ENCODE measurements at regions of chr19 and their contacts with region 1.

Region 1: DNA sequence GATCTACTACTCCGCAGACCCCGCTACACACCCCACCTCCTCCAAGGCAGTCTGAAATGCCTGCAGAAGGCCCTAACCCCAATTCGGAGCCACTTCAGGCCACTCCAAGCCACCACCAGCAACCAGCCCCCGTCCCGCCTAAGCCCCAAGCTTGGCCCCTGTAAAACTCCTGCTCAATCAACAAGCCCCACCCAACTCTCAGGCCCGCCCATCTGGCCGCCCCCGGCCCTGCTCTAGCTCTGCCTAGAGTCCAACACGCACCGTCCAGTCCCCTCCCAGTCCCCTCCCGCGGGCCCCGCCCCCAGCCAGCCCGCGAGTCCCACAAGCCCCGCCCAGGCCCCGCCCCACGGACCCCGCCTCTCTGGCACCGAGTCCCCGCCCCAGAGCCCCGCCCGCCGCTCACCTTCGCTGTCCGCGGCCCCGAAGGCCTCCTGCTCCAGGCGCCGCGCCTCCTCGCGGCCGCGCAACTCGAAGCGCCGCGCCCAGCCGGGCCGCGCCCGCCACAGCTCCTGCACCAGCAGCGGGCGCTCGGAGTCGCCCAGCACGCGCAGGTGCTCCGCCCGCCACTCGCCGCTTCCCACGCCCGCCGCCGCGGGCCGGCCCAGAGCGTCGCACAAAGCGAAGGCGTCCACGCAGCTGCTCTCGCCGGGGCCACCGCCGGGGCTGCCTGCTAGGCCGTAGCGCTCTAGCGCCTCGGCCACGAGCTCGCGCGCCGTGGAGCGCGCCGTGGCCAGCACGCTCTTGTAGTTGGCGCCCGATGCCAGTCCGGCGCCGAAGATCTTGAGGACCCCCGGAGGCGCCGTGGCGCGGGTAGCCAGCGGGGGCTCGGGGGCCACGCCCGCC is 1.6 kb downstream of the RASIP1 start:
- DNase-seq: peak; percentile 88 to 91
- ATAC-seq: peak; percentile 76 to 79
- H3K4me3 ChIP-seq: peak overlapping the region; percentile 50 to 75 (median 56)
- H3K27ac ChIP-seq: peak overlapping the region; percentile 79 to 88 (median 86)
- H3K4me1 ChIP-seq: peaks cover 3 to 16% of the 10 kb centered on the region in 2 donors
- H3K27me3 ChIP-seq: no peaks in the 10 kb centered on the region
- CTCF ChIP-seq: peak in 4 of 5 experiments; percentile 55 to 84 (median 74)
- POLR2A ChIP-seq: peak; percentile 55 to 66

Region 2: DNA sequence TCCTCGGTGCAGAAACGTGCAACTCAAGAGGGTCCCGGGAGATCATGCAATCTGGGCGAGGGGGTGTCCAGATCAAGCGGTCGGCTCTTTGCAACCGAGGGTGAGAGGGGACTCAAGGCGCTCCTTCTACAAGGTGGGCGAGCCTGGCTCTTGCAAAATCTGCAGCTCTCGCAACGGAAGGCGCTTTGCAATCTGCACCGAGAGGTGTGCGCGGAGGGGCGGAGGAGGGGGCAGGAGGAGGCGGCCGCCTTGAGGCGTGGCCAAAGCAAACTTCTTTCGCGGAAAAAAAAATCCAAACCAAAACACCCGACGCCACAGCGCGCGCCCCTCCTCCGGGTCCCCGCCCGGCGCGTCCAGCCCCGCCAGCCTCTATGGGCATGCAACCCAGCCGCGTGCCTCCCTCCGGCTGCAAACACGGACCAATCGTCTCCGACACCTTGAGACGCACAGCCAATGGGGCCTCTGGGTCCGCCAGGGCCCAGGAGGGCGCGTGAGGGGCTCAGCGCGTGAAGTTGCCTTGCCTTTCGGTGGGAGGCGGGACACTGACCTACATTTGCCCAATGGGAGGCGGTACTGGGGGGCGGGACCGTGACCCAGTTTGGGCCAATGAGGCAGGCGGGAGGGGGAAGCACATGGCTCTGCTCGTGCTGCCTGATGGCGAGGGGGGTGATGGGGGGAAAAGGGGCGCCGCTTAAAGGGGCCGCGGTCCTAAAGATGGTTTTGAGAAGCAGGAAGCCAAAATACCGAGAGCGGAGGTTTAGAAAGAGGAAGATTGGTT is 101.4 kb before region 1 on chr19 and contains the start of gene DBP:
- in situ Hi-C with region 1: loop called in 2 of 4 experiments (anchors 10 to 25 kb)
- intact Hi-C with region 1: no loop called
- DNase-seq: peak; percentile 99 to 100
- ATAC-seq: peak; percentile 52 to 55
- H3K4me3 ChIP-seq: peak within 1 kb of the TSS; percentile 58 to 95 (median 76)
- H3K27ac ChIP-seq: peak within 1 kb of the TSS; percentile 97 to 100 (median 100)
- H3K4me1 ChIP-seq: peaks cover 37 to 46% of the 10 kb centered on the region in 2 donors
- H3K27me3 ChIP-seq: no peaks in the 10 kb centered on the region
- CTCF ChIP-seq: peak in 1 of 5 experiments; percentile 21
- POLR2A ChIP-seq: peak; percentile 59 to 76
- total RNA-seq, gene DBP: 1.7 to 12.9 (median 4.4) TPM

Region 3: DNA sequence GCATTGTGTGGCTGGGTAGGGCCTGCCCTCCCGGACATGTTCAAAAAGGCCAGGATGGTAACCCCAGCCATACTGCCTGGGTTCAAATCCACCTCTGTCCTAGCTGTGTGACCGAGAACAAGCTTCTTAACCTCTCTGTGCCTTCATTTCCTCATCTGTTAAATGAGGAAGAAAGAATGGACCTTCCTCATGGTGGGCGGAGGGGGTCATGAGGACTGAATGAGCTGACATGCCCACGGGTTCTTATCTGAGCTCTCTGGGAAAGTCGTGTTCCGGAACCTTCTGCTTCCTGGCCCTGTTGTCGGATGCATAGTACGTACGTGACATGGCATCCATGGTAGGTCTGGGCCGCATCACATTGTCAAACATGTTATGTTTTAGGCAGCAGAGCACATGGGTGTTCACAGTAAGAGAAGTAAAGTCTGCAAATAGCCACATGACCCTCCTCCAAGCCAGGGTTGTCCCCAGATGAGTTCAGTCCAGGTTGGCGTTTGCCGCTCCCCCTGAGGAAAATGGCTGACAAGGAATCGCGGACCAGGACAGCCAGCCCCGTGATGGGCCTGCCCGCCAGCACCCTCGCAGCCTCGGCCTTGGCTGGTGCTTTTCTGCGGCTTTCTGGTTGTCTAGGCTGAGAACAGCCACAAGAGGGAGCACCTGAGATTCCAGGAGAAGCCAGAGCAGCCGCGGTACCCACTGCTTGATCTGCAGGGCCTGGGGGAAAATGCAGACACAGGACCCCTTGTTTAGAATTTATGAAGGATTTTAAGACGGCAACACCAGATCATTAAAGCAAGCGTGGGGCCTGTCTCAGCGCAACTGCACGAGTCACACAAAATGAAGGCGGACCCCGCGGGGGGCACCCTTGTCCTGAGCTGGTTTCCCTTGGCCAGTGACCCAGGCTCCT is 63.6 kb before region 1 on chr19:
- in situ Hi-C with region 1: no loop called
- intact Hi-C with region 1: loop called (anchors 1 kb)
- DNase-seq: peak; percentile 63 to 78
- ATAC-seq: peak; percentile 91 to 95
- H3K4me3 ChIP-seq: no peak overlapping the region
- H3K27ac ChIP-seq: peak overlapping the region in 1 of 4 donors; percentile 57
- H3K4me1 ChIP-seq: peaks cover 4 to 11% of the 10 kb centered on the region in 2 donors
- H3K27me3 ChIP-seq: no peaks in the 10 kb centered on the region
- CTCF ChIP-seq: peak; percentile 80 to 93 (median 89)
- POLR2A ChIP-seq: no peak

Region 4: GRCh38 chr19:48720613-48721296 is 18.0 kb before region 1 on chr19:
- in situ Hi-C with region 1: no loop called
- intact Hi-C with region 1: loop called (anchors 1 kb)
- DNase-seq: peak; percentile 100
- ATAC-seq: peak; percentile 83 to 91
- H3K4me3 ChIP-seq: peak overlapping the region; percentile 58 to 76 (median 66)
- H3K27ac ChIP-seq: peak overlapping the region; percentile 95 to 98 (median 96)
- H3K4me1 ChIP-seq: peaks cover 43 to 54% of the 10 kb centered on the region in 2 donors
- H3K27me3 ChIP-seq: no peaks in the 10 kb centered on the region
- CTCF ChIP-seq: no peak
- POLR2A ChIP-seq: no peak

Region 5: GRCh38 chr19:48760504-48761205 is 21.9 kb after region 1 on chr19:
- in situ Hi-C with region 1: no loop called
- intact Hi-C with region 1: no loop called
- DNase-seq: no peak
- ATAC-seq: no peak
- H3K4me3 ChIP-seq: no peak overlapping the region
- H3K27ac ChIP-seq: peak overlapping the region; percentile 30 to 73 (median 68)
- H3K4me1 ChIP-seq: peaks cover 10 to 14% of the 10 kb centered on the region in 2 donors
- H3K27me3 ChIP-seq: no peaks in the 10 kb centered on the region
- CTCF ChIP-seq: no peak
- POLR2A ChIP-seq: no peak

Region 6: DNA sequence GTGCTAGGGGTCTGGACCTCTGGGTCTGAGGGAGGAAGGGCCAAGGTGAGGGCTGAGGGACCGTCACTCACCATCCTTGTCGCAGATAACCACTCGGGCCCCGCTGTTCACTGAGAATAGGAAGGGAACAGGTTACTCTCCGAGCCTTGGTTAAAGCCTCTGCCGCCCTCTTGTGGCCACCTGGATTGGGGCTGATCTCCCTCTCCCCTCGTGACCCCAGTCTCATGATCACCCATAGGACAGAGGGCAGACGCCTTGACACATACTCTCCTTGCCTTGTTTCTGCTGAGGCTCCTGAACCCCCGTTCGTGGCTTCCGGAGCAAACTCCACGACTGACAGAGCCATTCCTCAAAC is 96.9 kb after region 1 on chr19:
- in situ Hi-C with region 1: no loop called
- intact Hi-C with region 1: loop called (anchors 5 kb)
- DNase-seq: peak; percentile 91 to 97
- ATAC-seq: peak; percentile 99 to 100
- H3K4me3 ChIP-seq: peak overlapping the region; percentile 24 to 42 (median 34)
- H3K27ac ChIP-seq: peak overlapping the region; percentile 65 to 72 (median 66)
- H3K4me1 ChIP-seq: peaks cover 0 to 7% of the 10 kb centered on the region in 2 donors
- H3K27me3 ChIP-seq: no peaks in the 10 kb centered on the region
- CTCF ChIP-seq: peak; percentile 91 to 99 (median 92)
- POLR2A ChIP-seq: peak; percentile 11 to 51